Caco-2 (cell line): ENCODE measurements at regions of chr3 and their contacts with region 1.

Region 1: DNA sequence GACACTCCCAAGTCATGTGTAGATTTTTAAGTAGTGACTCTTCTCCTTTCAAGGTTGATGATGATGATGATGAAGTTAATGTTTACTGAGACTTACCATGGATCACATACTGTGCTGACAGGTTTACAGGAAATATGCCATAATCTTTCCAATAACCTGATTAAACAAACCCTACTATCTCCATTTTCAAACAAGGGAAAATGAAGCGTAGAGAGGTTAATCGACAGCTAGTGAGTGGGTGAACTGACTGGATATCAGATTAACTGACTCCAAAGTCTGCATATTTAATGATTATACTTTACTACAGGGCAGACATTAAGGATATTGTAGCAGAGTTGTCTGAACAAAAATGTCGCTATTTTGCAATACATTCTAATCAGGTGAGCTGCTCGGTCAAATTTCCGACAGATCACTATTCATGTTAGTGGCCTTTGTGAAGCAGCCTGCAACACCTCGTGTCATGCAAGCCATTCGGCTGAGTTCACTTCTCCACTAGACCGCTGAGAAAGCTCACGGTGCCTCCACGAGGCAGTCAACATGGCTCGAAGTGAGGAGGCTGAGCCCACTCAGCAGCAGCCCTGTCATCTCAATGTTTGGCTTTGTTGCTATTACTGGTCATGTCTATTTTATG is 264.2 kb downstream of the NFKBIZ start:
- DNase-seq: peak; percentile 18 to 77
- H3K4me3 ChIP-seq: no peak overlapping the region
- H3K4me3 Mint-ChIP-seq: no peak overlapping the region
- H3K27ac Mint-ChIP-seq: no peak overlapping the region
- H3K4me1 ChIP-seq: peaks cover 10% of the 10 kb centered on the region
- H3K4me1 Mint-ChIP-seq: no peaks in the 10 kb centered on the region
- H3K27me3 ChIP-seq: no peaks in the 10 kb centered on the region
- H3K27me3 Mint-ChIP-seq: no peaks in the 10 kb centered on the region
- CTCF ChIP-seq: no peak

Region 2: GRCh38 chr3:101724329-101725193 is 389.0 kb before region 1 on chr3 and contains the start of gene CEP97:
- CTCF ChIA-PET with region 1: no interaction called
- POLR2A ChIA-PET with region 1: no interaction called
- intact Hi-C with region 1: no loop called
- DNase-seq: peak; percentile 89 to 90
- H3K4me3 ChIP-seq: peak within 1 kb of the TSS; percentile 55
- H3K4me3 Mint-ChIP-seq: peak within 1 kb of the TSS; percentile 96
- H3K27ac Mint-ChIP-seq: peak within 1 kb of the TSS; percentile 83
- H3K4me1 ChIP-seq: no peaks in the 10 kb centered on the region
- H3K4me1 Mint-ChIP-seq: no peaks in the 10 kb centered on the region
- H3K27me3 ChIP-seq: no peaks in the 10 kb centered on the region
- H3K27me3 Mint-ChIP-seq: no peaks in the 10 kb centered on the region
- CTCF ChIP-seq: no peak
- total RNA-seq, gene CEP97: 4.3 and 4.5 TPM in 2 replicates

Region 3: GRCh38 chr3:102057781-102058421 is 55.6 kb before region 1 on chr3:
- CTCF ChIA-PET with region 1: no interaction called
- POLR2A ChIA-PET with region 1: no interaction called
- intact Hi-C with region 1: no loop called
- DNase-seq: no peak
- H3K4me3 ChIP-seq: no peak overlapping the region
- H3K4me3 Mint-ChIP-seq: no peak overlapping the region
- H3K27ac Mint-ChIP-seq: no peak overlapping the region
- H3K4me1 ChIP-seq: no peaks in the 10 kb centered on the region
- H3K4me1 Mint-ChIP-seq: no peaks in the 10 kb centered on the region
- H3K27me3 ChIP-seq: no peaks in the 10 kb centered on the region
- H3K27me3 Mint-ChIP-seq: no peaks in the 10 kb centered on the region
- CTCF ChIP-seq: no peak

Region 4: GRCh38 chr3:102095383-102095782 is 18.1 kb before region 1 on chr3:
- CTCF ChIA-PET with region 1: no interaction called
- POLR2A ChIA-PET with region 1: no interaction called
- intact Hi-C with region 1: loop called (anchors 2 kb)
- DNase-seq: no peak
- H3K4me3 ChIP-seq: no peak overlapping the region
- H3K4me3 Mint-ChIP-seq: no peak overlapping the region
- H3K27ac Mint-ChIP-seq: no peak overlapping the region
- H3K4me1 ChIP-seq: peaks cover 29% of the 10 kb centered on the region
- H3K4me1 Mint-ChIP-seq: no peaks in the 10 kb centered on the region
- H3K27me3 ChIP-seq: no peaks in the 10 kb centered on the region
- H3K27me3 Mint-ChIP-seq: no peaks in the 10 kb centered on the region
- CTCF ChIP-seq: no peak

Region 5: GRCh38 chr3:102124301-102125158 is 11.0 kb after region 1 on chr3:
- CTCF ChIA-PET with region 1: no interaction called
- POLR2A ChIA-PET with region 1: no interaction called
- intact Hi-C with region 1: loop called (anchors 1 kb)
- DNase-seq: no peak
- H3K4me3 ChIP-seq: no peak overlapping the region
- H3K4me3 Mint-ChIP-seq: no peak overlapping the region
- H3K27ac Mint-ChIP-seq: no peak overlapping the region
- H3K4me1 ChIP-seq: peaks cover 6% of the 10 kb centered on the region; the same call in 1 of the 2 replicates
- H3K4me1 Mint-ChIP-seq: no peaks in the 10 kb centered on the region
- H3K27me3 ChIP-seq: no peaks in the 10 kb centered on the region
- H3K27me3 Mint-ChIP-seq: no peaks in the 10 kb centered on the region
- CTCF ChIP-seq: no peak